Naive thymus-derived CD4-positive, alpha-beta T cell (primary cell): ENCODE measurements at regions of chr17 and their contacts with region 1.

Region 1: DNA sequence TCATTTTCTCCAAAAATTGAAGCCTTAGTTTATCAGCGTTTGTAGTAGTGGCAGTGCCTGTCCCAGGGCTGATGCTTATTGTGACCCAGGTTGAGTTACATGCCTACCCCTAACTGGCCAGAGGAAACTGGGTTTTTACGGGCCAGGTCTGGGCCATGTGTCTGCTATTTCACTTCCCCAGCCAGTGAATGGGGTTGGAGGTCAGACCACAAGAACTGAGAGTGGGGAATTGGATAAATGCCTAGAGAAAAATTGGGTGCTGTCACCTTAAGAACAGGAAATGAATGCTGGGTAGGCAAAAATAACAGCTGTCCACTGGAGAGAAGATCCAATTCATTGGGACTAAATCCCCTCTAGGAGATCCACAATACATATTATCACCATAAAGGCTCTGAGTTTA is 5.2 kb downstream of the ADPRM start:
- DNase-seq: no peak
- ATAC-seq: no peak
- H3K4me3 ChIP-seq: no peak overlapping the region
- H3K4me3 Mint-ChIP-seq: peak overlapping the region; percentile 55 to 100 (median 73)
- H3K27ac ChIP-seq: peak overlapping the region; percentile 63
- H3K27ac Mint-ChIP-seq: peak overlapping the region; percentile 63 to 99 (median 91)
- H3K4me1 ChIP-seq: peaks cover 29 to 64% of the 10 kb centered on the region in 2 donors
- H3K4me1 Mint-ChIP-seq: peaks cover 35 to 84% (median 71%) of the 10 kb centered on the region in 7 donors
- H3K27me3 ChIP-seq: no peaks in the 10 kb centered on the region
- H3K27me3 Mint-ChIP-seq: no peaks in the 10 kb centered on the region

Region 2: GRCh38 chr17:10713318-10713717 is 10.7 kb after region 1 on chr17:
- CTCF ChIA-PET with region 1: interaction called, 4 read pairs
- POLR2A ChIA-PET with region 1: interaction called, 14 read pairs
- intact Hi-C with region 1: loop called in 1 of 2 experiments (anchors 2 kb)
- DNase-seq: no peak
- ATAC-seq: no peak
- H3K4me3 ChIP-seq: no peak overlapping the region
- H3K4me3 Mint-ChIP-seq: no peak overlapping the region
- H3K27ac ChIP-seq: no peak overlapping the region
- H3K27ac Mint-ChIP-seq: peak overlapping the region in 3 of 9 donors; percentile 17 to 38 (median 19)
- H3K4me1 ChIP-seq: no peaks in the 10 kb centered on the region
- H3K4me1 Mint-ChIP-seq: peaks cover 4 to 32% (median 15%) of the 10 kb centered on the region in 7 donors
- H3K27me3 ChIP-seq: no peaks in the 10 kb centered on the region
- H3K27me3 Mint-ChIP-seq: no peaks in the 10 kb centered on the region